AG04450 (cell line): ENCODE measurements at regions of chr14 and their contacts with region 1.

Region 1: GRCh38 chr14:30214461-30215090 is 286.9 kb upstream of the PRKD1 start:
- DNase-seq: peak; percentile 59
- H3K4me3 ChIP-seq: no peak overlapping the region
- H3K27ac ChIP-seq: no peak overlapping the region
- H3K27me3 ChIP-seq: no peaks in the 10 kb centered on the region
- CTCF ChIP-seq: peak; percentile 74

Region 2: GRCh38 chr14:28756884-28757570 is 1457.5 kb before region 1 on chr14:
- CTCF ChIA-PET with region 1: interaction called, 21 read pairs
- POLR2A ChIA-PET with region 1: no interaction called
- DNase-seq: no peak
- H3K4me3 ChIP-seq: no peak overlapping the region
- H3K27ac ChIP-seq: no peak overlapping the region
- H3K27me3 ChIP-seq: peaks cover 65% of the 10 kb centered on the region
- CTCF ChIP-seq: peak; percentile 87

Region 3: GRCh38 chr14:29548948-29549370 is 665.6 kb before region 1 on chr14:
- CTCF ChIA-PET with region 1: interaction called, 137 read pairs
- POLR2A ChIA-PET with region 1: no interaction called
- DNase-seq: peak; percentile 42
- H3K4me3 ChIP-seq: no peak overlapping the region
- H3K27ac ChIP-seq: no peak overlapping the region
- H3K27me3 ChIP-seq: no peaks in the 10 kb centered on the region
- CTCF ChIP-seq: peak; percentile 60

Region 4: DNA sequence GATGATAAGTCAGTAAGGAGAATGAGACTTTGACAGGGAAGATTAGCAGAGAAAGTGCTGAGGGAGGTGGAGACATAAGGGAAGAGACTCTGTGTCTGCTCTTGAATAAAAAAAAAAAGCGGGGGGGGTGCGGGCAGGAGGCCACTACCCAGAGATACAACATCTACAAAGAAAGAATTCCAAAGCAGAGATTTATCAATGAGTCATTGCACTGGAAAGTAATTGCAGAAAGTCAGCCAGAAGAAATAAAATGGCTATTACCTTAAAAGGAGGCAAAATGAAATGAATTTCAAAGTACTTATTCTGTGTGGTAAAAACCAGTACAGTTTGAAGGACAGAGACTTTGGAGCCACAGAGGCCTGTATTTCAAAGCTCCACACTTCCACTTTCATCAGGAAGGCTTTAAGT is 19.8 kb before region 1 on chr14:
- CTCF ChIA-PET with region 1: interaction called, 14 read pairs
- POLR2A ChIA-PET with region 1: interaction called, 3 read pairs
- DNase-seq: peak; percentile 69
- H3K4me3 ChIP-seq: no peak overlapping the region
- H3K27ac ChIP-seq: peak overlapping the region; percentile 88
- H3K27me3 ChIP-seq: no peaks in the 10 kb centered on the region
- CTCF ChIP-seq: no peak

Region 5: GRCh38 chr14:30252783-30253674 is 38.5 kb after region 1 on chr14:
- CTCF ChIA-PET with region 1: no interaction called
- POLR2A ChIA-PET with region 1: no interaction called
- DNase-seq: no peak
- H3K4me3 ChIP-seq: no peak overlapping the region
- H3K27ac ChIP-seq: no peak overlapping the region
- H3K27me3 ChIP-seq: no peaks in the 10 kb centered on the region
- CTCF ChIP-seq: no peak

Region 6: GRCh38 chr14:30270200-30271161 is 55.9 kb after region 1 on chr14:
- CTCF ChIA-PET with region 1: interaction called, 53 read pairs
- POLR2A ChIA-PET with region 1: no interaction called
- DNase-seq: peak; percentile 61
- H3K4me3 ChIP-seq: peak overlapping the region; percentile 33
- H3K27ac ChIP-seq: no peak overlapping the region
- H3K27me3 ChIP-seq: no peaks in the 10 kb centered on the region
- CTCF ChIP-seq: peak; percentile 96

Region 7: DNA sequence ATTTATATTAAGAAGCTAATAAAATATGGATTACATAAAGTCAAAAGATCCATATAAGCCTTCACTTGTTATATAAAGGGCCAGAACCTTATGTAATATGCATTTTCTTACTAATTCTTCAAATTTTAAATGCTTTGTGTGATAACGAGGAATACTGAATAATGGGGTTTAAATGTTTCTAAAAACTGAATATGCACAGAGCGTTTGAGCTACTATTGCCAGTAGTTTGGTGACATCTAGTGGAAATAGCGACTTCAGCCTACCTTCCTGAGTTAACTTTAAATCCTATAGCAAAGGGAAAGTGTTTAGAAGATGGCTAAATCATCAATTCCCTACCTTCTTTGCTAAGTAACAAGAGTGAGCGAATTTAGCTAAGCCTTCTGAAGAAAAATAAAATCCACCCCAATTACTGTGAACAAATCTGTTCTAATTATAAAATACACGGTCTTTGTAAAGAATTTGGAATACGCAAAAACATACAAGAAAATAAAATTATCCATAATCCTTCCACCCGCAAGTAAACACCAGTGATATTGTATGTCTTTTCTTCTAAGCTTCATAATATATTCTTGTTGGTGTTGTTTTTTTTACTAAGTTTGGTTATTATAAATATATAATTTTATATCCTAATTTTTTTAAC is 228.9 kb after region 1 on chr14:
- CTCF ChIA-PET with region 1: interaction called, 13 read pairs
- POLR2A ChIA-PET with region 1: no interaction called
- DNase-seq: no peak
- H3K4me3 ChIP-seq: no peak overlapping the region
- H3K27ac ChIP-seq: no peak overlapping the region
- H3K27me3 ChIP-seq: no peaks in the 10 kb centered on the region
- CTCF ChIP-seq: peak; percentile 54